Posterior vena cava (tissue), 2 donors: ENCODE measurements at regions of chr5 and their contacts with region 1.

Region 1: DNA sequence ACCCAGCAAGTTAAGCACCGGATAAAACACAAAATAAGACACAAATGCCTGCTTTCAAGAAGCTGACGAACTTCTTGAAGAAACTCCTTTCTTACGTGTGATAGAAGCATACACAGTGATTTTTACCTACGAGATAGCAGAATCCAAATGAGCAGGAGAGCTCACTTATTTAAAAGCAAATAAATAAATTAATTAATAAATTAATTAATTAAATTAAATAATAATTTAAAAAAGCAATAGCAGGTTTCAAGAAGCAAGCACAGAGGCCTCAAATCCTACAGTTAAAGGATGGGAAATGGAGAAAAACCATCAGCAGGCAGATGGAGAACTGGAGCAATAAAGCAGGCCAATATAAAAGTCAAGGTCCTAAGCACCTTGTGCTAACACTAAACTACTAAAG is 17.3 kb downstream of the LEAP2 start:
- DNase-seq: no peak

Region 2: GRCh38 chr5:132662925-132663770 is 227.7 kb before region 1 on chr5:
- intact Hi-C with region 1: no loop called
- DNase-seq: no peak

Region 3: DNA sequence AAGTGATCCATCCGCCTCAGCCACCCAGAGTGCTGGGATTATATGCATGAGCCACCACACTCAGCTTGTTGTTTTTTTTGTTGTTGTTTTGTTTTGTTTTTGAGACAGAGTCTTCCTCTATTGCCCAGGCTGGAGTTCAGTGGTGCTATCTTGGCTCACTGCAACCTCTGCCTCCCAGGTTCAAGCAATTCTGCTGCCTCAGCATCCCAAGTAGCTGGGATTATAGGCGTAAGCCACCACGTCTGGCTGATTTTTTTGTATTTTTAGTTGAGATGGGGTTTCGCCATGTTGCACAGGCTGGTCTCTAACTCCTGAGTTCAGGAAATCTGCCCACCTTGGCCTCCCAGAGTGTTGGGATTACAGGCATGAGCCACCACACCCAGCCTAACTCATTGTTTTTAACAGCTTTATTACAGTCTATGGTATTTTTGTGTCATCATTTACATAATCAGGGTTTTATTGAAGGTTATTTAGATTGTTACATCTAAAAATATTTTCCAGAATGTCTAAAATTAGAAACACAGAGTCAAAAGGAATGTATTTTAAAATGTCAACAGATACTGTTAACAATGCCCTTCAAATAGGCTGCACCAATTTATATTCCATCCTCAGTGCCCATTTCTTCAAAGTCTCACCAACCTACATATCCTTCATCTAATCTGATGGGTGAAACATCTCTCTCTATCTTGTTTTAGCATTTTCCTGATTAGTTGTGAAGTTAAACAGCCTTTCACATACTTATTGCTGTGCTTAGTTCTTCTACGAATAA is 172.1 kb before region 1 on chr5:
- intact Hi-C with region 1: loop called in 1 of 2 experiments (anchors 5 kb)
- DNase-seq: no peak

Region 4: GRCh38 chr5:132787076-132787475 is 103.7 kb before region 1 on chr5:
- intact Hi-C with region 1: no loop called
- DNase-seq: no peak

Region 5: DNA sequence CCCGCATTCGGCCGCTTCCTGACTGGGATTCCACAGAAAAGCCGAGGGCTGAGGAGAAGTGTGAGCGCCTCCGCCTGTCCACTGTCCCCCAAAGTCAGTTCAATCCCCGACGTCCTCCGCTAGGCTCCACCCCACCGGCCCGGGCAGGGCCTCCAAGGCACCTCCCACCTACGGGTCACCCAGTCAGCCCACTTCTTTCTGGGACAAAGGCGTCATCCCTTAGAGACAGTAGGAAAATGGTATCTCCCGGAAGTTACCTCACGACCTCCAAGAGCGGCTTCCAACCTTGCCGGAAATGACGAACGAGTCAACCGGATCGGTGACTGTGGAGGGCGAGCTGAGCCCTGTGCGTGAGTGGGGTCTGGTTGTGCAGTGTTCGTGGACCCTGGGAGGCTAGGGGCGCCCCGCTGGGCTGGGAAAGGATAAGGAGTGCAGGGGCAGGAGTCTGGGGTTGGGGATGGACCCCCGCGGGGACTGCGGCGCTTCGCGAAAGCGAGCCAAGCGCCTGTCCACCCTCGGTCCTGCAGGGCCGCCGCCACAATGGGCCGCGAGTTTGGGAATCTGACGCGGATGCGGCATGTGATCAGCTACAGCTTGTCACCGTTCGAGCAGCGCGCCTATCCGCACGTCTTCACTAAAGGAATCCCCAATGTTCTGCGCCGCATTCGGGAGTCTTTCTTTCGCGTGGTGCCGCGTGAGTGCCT is 24.3 kb before region 1 on chr5 and contains the starts of genes GDF9 and UQCRQ:
- intact Hi-C with region 1: no loop called
- DNase-seq: peak; percentile 98
- total RNA-seq, gene GDF9: 0.33 to 0.51 TPM
- total RNA-seq, gene UQCRQ: 364 to 379 TPM